ENCODE measurements at regions of chr3 and their contacts with region 1.

Region 1: GRCh38 chr3:113673593-113673992 is 22.8 kb downstream of the USF3 start:
- DNase-seq: no peak
- ATAC-seq: peak; percentile 56
- H3K4me3 ChIP-seq: no peak overlapping the region
- H3K4me3 Mint-ChIP-seq: no peak overlapping the region
- H3K27ac ChIP-seq: peak overlapping the region; percentile 27 to 60
- H3K27ac Mint-ChIP-seq: peak overlapping the region; percentile 70
- H3K4me1 ChIP-seq: peaks cover 13 to 26% of the 10 kb centered on the region in 2 donors
- H3K4me1 Mint-ChIP-seq: peaks cover 43% of the 10 kb centered on the region
- H3K27me3 ChIP-seq: no peaks in the 10 kb centered on the region
- H3K27me3 Mint-ChIP-seq: no peaks in the 10 kb centered on the region
- CTCF ChIP-seq: no peak

Region 2: GRCh38 chr3:113660896-113661295 is 12.7 kb before region 1 on chr3:
- CTCF ChIA-PET with region 1: no interaction called
- POLR2A ChIA-PET with region 1: interaction called, 3 read pairs
- intact Hi-C with region 1: loop called (anchors 2 kb)
- DNase-seq: peak; percentile 68
- ATAC-seq: peak; percentile 25
- H3K4me3 ChIP-seq: peak overlapping the region in 1 of 5 experiments; percentile 49
- H3K4me3 Mint-ChIP-seq: peak overlapping the region; percentile 70
- H3K27ac ChIP-seq: peak overlapping the region; percentile 81 to 93
- H3K27ac Mint-ChIP-seq: peak overlapping the region; percentile 94
- H3K4me1 ChIP-seq: peaks cover 76 to 81% of the 10 kb centered on the region in 2 donors
- H3K4me1 Mint-ChIP-seq: peaks cover 82% of the 10 kb centered on the region
- H3K27me3 ChIP-seq: no peaks in the 10 kb centered on the region
- H3K27me3 Mint-ChIP-seq: no peaks in the 10 kb centered on the region
- CTCF ChIP-seq: no peak